ENCODE measurements at regions of chr2 and their contacts with region 1.

Region 1: GRCh38 chr2:141666191-141666590 is 464.6 kb downstream of the LRP1B start:
- DNase-seq: no peak
- H3K4me3 ChIP-seq: no peak overlapping the region
- H3K27ac ChIP-seq: no peak overlapping the region
- H3K4me1 ChIP-seq: no peaks in the 10 kb centered on the region
- H3K27me3 ChIP-seq: no peaks in the 10 kb centered on the region
- CTCF ChIP-seq: no peak
- POLR2A ChIP-seq: no peak

Region 2: GRCh38 chr2:139825726-139826125 is 1840.5 kb before region 1 on chr2:
- intact Hi-C with region 1: loop called (anchors 5 kb)
- DNase-seq: no peak
- H3K4me3 ChIP-seq: no peak overlapping the region
- H3K27ac ChIP-seq: no peak overlapping the region
- H3K4me1 ChIP-seq: no peaks in the 10 kb centered on the region
- H3K27me3 ChIP-seq: no peaks in the 10 kb centered on the region
- CTCF ChIP-seq: no peak
- POLR2A ChIP-seq: no peak

Region 3: GRCh38 chr2:141482697-141483096 is 183.5 kb before region 1 on chr2:
- intact Hi-C with region 1: no loop called
- DNase-seq: no peak
- H3K4me3 ChIP-seq: no peak overlapping the region
- H3K27ac ChIP-seq: no peak overlapping the region
- H3K4me1 ChIP-seq: no peaks in the 10 kb centered on the region
- H3K27me3 ChIP-seq: no peaks in the 10 kb centered on the region
- CTCF ChIP-seq: no peak
- POLR2A ChIP-seq: no peak

Measured in breast epithelium (tissue), 4 donors.